ENCODE measurements at regions of chr1 and their contacts with region 1.

Region 1: DNA sequence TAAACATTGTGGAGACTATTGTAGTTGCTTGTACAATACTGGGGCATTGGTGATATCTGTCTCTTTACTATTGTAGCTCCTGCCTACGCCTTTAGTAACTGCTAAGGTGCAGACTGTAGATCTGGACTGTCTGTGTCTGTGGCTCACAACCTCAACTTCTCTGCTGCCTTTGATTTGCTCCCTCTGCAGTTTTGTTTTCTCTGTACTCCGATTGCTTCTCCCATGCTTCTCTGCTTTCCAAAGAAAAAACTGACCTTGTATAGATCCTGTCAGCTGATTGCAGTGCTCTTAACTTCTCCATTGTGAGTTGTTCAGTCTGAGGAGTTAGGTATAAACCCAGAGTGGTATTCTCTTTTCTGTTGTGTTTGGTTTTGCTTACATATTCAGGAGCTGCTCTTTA is 15.3 kb downstream of the MAGI3 start:
- H3K4me3 ChIP-seq: no peak overlapping the region
- H3K27ac ChIP-seq: no peak overlapping the region
- H3K4me1 ChIP-seq: peaks cover 13% of the 10 kb centered on the region; the same call in 1 of the 2 replicates
- CTCF ChIP-seq: no peak

Region 2: GRCh38 chr1:113389953-113390834 is 15.4 kb before region 1 on chr1 and contains the start of gene MAGI3:
- CTCF ChIA-PET with region 1: interaction called, 3 read pairs
- POLR2A ChIA-PET with region 1: interaction called, 10 read pairs
- H3K4me3 ChIP-seq: peak within 1 kb of the TSS; percentile 97
- H3K27ac ChIP-seq: peak within 1 kb of the TSS; percentile 93
- H3K4me1 ChIP-seq: peaks cover 17% of the 10 kb centered on the region
- CTCF ChIP-seq: no peak

Region 3: GRCh38 chr1:113416496-113416895 is 10.9 kb after region 1 on chr1:
- CTCF ChIA-PET with region 1: interaction called, 3 read pairs
- POLR2A ChIA-PET with region 1: interaction called, 11 read pairs
- H3K4me3 ChIP-seq: no peak overlapping the region
- H3K27ac ChIP-seq: no peak overlapping the region
- H3K4me1 ChIP-seq: 0 out of 2 replicates have a peak, but pooled peaks cover 3% of the 10 kb centered on the region
- CTCF ChIP-seq: no peak